H1 (cell line): ENCODE measurements at regions of chr10 and their contacts with region 1.

Region 1: DNA sequence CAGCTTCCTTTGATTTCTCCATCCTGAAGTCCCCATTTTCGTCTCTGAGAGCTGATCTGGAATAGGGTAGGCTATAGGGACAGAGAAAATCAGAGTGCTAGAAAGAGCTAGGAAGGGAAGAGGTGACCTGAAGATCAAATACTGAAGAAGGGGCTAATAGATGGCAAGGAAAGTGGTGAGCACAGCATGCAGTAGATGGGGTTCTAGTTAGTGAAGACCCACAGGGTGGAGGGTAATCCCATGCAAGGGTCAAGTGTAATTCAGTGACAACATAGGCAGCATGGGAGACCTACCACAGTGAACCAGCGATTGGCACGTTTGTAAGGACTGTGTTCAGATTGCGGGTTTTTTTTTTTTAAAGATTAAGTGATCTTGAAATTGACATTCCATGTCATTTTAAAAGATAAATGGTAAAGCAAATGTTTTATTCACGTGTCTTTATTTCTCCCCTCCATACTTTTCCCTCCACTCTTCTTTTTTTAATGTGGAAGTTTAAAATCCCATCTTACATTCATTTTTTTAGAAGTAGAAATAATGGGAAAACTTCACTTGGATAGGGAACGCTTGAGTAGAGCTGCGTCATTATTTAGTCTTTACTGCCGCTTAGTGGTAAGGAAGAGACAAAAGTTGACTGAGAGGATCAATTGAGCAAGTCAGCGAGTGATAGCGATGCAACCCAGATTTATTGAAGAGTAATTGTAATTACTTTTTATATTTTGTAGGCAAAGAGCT is 21.0 kb upstream of the ABI1 start:
- DNase-seq: no peak
- H3K4me3 ChIP-seq: no peak overlapping the region
- H3K27ac ChIP-seq: no peak overlapping the region
- H3K4me1 ChIP-seq: no peaks in the 10 kb centered on the region
- H3K27me3 ChIP-seq: no peaks in the 10 kb centered on the region; a peak in 1 of 7 replicates
- CTCF ChIP-seq: peak in 2 of 3 experiments; percentile 69 to 77; a peak in 3 of 4 replicates
- EP300 ChIP-seq: no peak
- POLR2A ChIP-seq: no peak
- RAD21 ChIP-seq: peak; percentile 86 to 90

Region 2: DNA sequence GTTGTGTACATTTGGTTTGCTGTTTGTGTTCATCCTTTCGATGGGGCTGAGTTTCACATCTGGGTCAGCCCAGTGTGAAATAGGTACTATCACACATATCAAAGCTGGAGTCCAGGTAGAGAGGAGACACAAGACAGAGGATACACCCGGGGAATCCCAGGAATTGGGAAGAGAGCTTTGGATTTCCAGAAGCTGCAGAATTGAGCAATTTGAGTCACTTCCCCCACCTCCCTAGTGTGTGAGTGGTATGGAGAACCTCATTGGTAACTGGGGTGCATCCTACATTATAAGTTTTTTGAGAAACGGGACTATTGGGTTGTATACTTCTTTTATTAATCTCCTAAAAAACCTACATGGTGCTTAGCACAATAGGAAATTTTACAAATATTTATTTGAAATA is 196.3 kb before region 1 on chr10:
- CTCF ChIA-PET with region 1: interaction called, 11 read pairs
- POLR2A ChIA-PET with region 1: no interaction called
- DNase-seq: no peak
- H3K4me3 ChIP-seq: no peak overlapping the region
- H3K27ac ChIP-seq: no peak overlapping the region
- H3K4me1 ChIP-seq: no peaks in the 10 kb centered on the region
- H3K27me3 ChIP-seq: no peaks in the 10 kb centered on the region
- CTCF ChIP-seq: no peak
- EP300 ChIP-seq: no peak
- POLR2A ChIP-seq: no peak
- RAD21 ChIP-seq: no peak

Region 3: GRCh38 chr10:26706206-26706605 is 175.6 kb before region 1 on chr10:
- CTCF ChIA-PET with region 1: interaction called, 11 read pairs
- POLR2A ChIA-PET with region 1: no interaction called
- DNase-seq: no peak
- H3K4me3 ChIP-seq: no peak overlapping the region
- H3K27ac ChIP-seq: no peak overlapping the region
- H3K4me1 ChIP-seq: no peaks in the 10 kb centered on the region
- H3K27me3 ChIP-seq: no peaks in the 10 kb centered on the region
- CTCF ChIP-seq: no peak
- EP300 ChIP-seq: no peak
- POLR2A ChIP-seq: no peak
- RAD21 ChIP-seq: no peak

Region 4: GRCh38 chr10:26860443-26861204 is 21.1 kb before region 1 on chr10 and contains the start of gene ABI1:
- CTCF ChIA-PET with region 1: interaction called, 29 read pairs
- POLR2A ChIA-PET with region 1: no interaction called
- DNase-seq: peak; percentile 95 to 97
- H3K4me3 ChIP-seq: peak within 1 kb of the TSS; percentile 94 to 99 (median 94)
- H3K27ac ChIP-seq: peak within 1 kb of the TSS; percentile 87
- H3K4me1 ChIP-seq: peaks cover 0 to 2% (median 0%) of the 10 kb centered on the region in 4 experiments; a peak in 4 of 7 replicates
- H3K27me3 ChIP-seq: no peaks in the 10 kb centered on the region
- CTCF ChIP-seq: no peak
- EP300 ChIP-seq: no peak
- POLR2A ChIP-seq: peak; percentile 90 to 95
- RAD21 ChIP-seq: no peak
- total RNA-seq, gene ABI1: 35.6 and 37.0 TPM in 2 replicates